Activated CD4-positive, alpha-beta memory T cell treated with anti-CD3 and anti-CD28 coated beads, Interleukin-2, amount 10 ng/mL, durations not matched to agents 7 days and 5 days (primary cell): ENCODE measurements at regions of chr11 and their contacts with region 1.

Region 1: GRCh38 chr11:18115360-18116127 is 9.7 kb upstream of the SAAL1 start:
- DNase-seq: peak; percentile 69
- H3K4me3 Mint-ChIP-seq: no peak overlapping the region
- H3K27ac Mint-ChIP-seq: no peak overlapping the region
- H3K4me1 Mint-ChIP-seq: no peaks in the 10 kb centered on the region
- H3K27me3 Mint-ChIP-seq: peaks cover 29% of the 10 kb centered on the region

Region 2: DNA sequence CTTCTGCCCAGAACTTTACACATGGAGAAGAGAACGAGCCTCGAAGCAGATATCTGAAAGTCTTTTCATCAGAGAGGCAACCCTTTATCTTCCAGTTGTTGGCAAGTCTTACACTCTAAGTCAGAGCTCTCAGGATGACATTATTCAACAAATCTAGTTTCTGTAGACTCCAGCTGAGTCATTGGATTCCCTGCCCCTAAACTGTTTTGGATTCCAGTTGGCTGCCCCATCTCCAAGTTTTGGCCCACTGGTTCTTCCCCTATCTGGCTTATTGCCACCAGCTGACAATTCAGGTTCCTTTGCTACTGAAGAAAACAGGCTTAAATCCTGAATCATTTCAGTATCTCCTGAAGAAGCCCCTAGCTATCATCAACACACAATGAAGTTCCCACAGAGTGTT is 23.8 kb before region 1 on chr11:
- CTCF ChIA-PET with region 1: no interaction called
- POLR2A ChIA-PET with region 1: no interaction called
- DNase-seq: no peak
- H3K4me3 Mint-ChIP-seq: no peak overlapping the region
- H3K27ac Mint-ChIP-seq: no peak overlapping the region
- H3K4me1 Mint-ChIP-seq: no peaks in the 10 kb centered on the region
- H3K27me3 Mint-ChIP-seq: no peaks in the 10 kb centered on the region

Region 3: DNA sequence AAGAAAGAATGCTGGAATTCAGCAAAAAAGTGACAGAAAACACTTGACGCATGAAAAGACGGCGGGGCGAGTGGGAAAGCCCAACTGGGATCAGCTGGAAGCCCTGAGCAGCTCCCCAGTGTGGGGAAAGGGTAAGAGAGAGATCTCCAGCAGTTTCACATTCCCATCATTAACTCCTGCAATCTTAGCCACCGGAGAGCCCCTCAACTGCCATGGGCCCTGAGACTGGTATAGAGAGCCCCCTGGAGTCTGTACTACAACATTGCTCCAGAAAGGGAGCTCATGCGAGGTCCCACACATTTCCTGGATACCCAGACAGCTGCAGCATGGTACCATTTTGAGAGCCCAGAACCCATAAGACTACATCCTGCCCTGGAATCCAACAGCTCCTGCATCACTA is 88.2 kb after region 1 on chr11:
- CTCF ChIA-PET with region 1: interaction called, 15 read pairs
- POLR2A ChIA-PET with region 1: no interaction called
- DNase-seq: no peak
- H3K4me3 Mint-ChIP-seq: no peak overlapping the region
- H3K27ac Mint-ChIP-seq: no peak overlapping the region
- H3K4me1 Mint-ChIP-seq: peaks cover 15% of the 10 kb centered on the region
- H3K27me3 Mint-ChIP-seq: peaks cover 43% of the 10 kb centered on the region